Kidney (tissue), 22 donors: ENCODE measurements at regions of chr18 and their contacts with region 1.

Region 1: GRCh38 chr18:78031589-78031988 is 781.9 kb downstream of the GALR1 start:
- DNase-seq: no peak
- H3K4me3 ChIP-seq: no peak overlapping the region
- H3K27ac ChIP-seq: no peak overlapping the region
- H3K4me1 ChIP-seq: no peaks in the 10 kb centered on the region
- H3K27me3 ChIP-seq: no peaks in the 10 kb centered on the region
- CTCF ChIP-seq: no peak

Region 2: DNA sequence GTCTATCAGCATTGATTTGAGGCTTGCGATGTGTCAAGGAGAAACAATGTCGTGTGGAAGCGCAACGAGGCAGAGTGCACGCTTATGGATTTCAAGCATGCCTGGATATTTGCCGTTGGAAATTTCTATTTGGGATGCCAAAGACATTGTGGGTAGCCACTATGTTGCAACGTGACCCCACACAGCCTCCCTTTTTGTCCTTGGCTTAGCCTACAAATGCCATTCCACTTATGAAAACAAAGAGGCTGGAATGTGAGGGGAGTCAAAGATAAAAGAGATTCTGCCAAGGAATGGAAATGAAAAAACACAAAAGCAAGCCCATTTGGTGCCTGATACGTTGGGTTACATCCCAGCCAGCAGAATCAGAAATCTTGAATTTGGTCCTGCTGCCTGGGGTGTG is 60.8 kb before region 1 on chr18:
- intact Hi-C with region 1: loop called (anchors 10 kb)
- DNase-seq: peak in 2 of 5 donors; percentile 31 to 44
- H3K4me3 ChIP-seq: no peak overlapping the region
- H3K27ac ChIP-seq: no peak overlapping the region
- H3K4me1 ChIP-seq: no peaks in the 10 kb centered on the region
- H3K27me3 ChIP-seq: no peaks in the 10 kb centered on the region
- CTCF ChIP-seq: no peak

Region 3: DNA sequence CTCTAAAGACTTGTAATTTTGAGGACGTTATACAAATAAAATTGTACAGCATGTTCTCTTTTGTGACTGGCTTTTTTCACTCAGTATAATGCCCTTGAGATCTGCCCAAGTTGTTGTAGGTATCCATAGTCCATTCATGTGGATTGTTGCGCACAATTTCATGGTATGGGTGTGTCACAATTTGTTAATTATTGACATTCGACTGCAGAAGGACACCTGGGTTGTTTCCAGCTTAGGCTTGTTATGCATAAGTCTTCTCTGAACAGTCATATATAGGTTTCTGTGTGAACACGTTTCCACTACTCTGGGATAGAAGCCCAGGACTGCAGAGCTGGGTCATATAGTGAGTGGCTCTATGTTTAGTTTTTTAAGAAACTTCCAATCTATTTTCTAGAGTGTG is 147.2 kb after region 1 on chr18:
- intact Hi-C with region 1: no loop called
- DNase-seq: no peak
- H3K4me3 ChIP-seq: no peak overlapping the region
- H3K27ac ChIP-seq: no peak overlapping the region
- H3K4me1 ChIP-seq: no peaks in the 10 kb centered on the region
- H3K27me3 ChIP-seq: no peaks in the 10 kb centered on the region
- CTCF ChIP-seq: no peak

Region 4: GRCh38 chr18:78304192-78305164 is 272.9 kb after region 1 on chr18:
- intact Hi-C with region 1: no loop called
- DNase-seq: peak in 1 of 5 donors; percentile 21
- H3K4me3 ChIP-seq: no peak overlapping the region
- H3K27ac ChIP-seq: no peak overlapping the region
- H3K4me1 ChIP-seq: no peaks in the 10 kb centered on the region
- H3K27me3 ChIP-seq: no peaks in the 10 kb centered on the region
- CTCF ChIP-seq: no peak